Right cardiac atrium (tissue), 5 donors: ENCODE measurements at regions of chr3 and their contacts with region 1.

Region 1: DNA sequence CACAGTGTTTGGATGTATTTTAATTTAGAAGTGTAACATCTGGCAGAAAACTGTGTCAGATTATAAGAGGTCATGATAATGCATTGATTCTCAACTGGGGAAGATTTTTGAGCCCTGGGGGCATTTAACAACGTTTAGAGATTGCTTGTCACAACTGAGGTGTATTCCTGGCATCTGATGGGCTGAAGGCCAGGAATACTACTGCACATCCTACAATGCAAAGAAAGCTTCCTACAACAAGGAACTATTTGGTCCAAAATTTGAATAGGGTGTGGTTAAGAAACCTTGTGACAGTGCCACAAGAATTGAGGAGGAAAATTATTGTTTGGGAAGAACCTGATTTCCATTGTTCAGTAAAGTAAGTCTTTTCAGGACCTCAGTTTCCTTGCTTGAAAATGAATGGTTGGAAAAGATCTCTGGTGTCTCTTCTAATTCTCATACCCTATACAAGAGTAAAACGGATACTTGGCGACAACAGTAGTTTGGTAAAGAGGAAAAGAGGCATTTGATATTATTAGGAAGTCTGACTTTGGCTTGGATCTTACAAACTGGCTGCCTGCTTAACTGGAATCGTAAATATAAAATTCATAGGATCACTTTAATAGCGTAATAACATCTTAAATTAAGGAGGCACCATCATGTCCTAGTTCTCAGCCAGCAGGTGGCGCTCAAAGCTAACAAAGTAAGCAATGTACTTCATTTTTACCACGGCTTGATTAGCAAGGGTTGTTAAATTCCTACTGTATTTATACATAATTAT is 4.3 kb downstream of the DAZL start:
- DNase-seq: peak; percentile 84 to 93 (median 86)
- ATAC-seq: peak; percentile 60 to 76
- H3K4me3 ChIP-seq: no peak overlapping the region
- H3K27ac ChIP-seq: no peak overlapping the region
- H3K4me1 ChIP-seq: no peaks in the 10 kb centered on the region
- H3K27me3 ChIP-seq: no peaks in the 10 kb centered on the region

Region 2: GRCh38 chr3:16639806-16640205 is 38.8 kb after region 1 on chr3:
- intact Hi-C with region 1: no loop called
- DNase-seq: no peak
- ATAC-seq: no peak
- H3K4me3 ChIP-seq: no peak overlapping the region
- H3K27ac ChIP-seq: no peak overlapping the region
- H3K4me1 ChIP-seq: no peaks in the 10 kb centered on the region
- H3K27me3 ChIP-seq: no peaks in the 10 kb centered on the region

Region 3: DNA sequence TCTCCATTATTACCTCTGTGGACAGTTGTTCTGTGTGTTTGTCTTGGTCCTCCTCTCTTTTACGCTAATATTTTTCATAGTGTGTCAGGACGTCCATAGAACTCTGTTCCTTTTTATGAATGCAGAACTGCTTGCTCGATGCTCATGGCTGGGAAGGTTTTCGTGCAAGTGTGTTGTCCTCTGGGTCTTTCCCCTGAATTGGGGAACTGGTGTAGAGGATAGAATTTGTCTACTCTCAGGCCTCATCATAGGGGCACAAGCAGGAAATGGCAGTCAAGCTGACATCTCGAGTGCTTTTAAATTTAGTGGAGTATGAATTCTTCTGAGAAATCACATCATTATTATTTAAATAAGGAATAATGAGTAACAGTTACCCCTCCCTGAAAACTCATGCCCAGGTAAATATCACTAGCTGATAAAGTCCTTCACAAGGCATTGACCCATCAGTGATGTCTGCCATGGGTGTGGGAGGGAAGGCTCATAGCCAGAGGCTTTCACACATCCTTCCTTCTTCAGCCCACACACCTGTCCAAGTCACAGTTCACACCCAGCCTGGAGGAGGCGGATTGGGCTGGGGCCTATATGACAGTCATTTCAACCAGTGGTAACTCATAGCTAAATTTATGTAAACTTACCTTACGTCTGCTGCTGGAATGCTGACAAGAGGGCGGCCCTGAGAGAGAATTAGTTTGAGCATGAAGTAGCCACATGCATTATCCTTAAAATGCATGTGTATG is 509.9 kb after region 1 on chr3:
- intact Hi-C with region 1: no loop called
- DNase-seq: no peak
- ATAC-seq: no peak
- H3K4me3 ChIP-seq: no peak overlapping the region
- H3K27ac ChIP-seq: no peak overlapping the region
- H3K4me1 ChIP-seq: no peaks in the 10 kb centered on the region
- H3K27me3 ChIP-seq: no peaks in the 10 kb centered on the region

Region 4: DNA sequence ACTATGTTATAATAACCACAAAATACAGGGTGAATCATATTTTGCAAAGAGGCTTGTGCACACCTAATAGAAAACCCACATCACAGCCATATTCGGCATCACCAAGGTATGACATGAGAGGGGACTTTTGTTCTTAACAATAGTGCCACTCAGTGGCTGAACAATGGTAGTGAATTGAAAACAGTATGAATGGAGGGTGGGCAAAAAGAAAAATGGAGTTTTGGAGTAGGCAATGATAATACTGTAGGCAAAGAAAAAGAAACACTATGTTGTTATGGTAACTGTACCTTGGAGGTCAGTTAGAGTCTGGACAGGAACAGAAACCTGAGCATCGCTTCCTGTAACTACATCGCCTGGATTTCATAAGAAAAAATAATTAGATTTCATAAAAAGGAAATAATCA is 632.4 kb after region 1 on chr3:
- intact Hi-C with region 1: loop called (anchors 5 kb)
- DNase-seq: no peak
- ATAC-seq: peak; percentile 80 to 85
- H3K4me3 ChIP-seq: no peak overlapping the region
- H3K27ac ChIP-seq: no peak overlapping the region
- H3K4me1 ChIP-seq: no peaks in the 10 kb centered on the region
- H3K27me3 ChIP-seq: no peaks in the 10 kb centered on the region